H1 (cell line): ENCODE measurements at regions of chr17 and their contacts with region 1.

Region 1: GRCh38 chr17:79087428-79088143 is 13.0 kb downstream of the ENGASE start:
- DNase-seq: peak in 1 of 2 experiments; percentile 97
- H3K4me3 ChIP-seq: no peak overlapping the region
- H3K27ac ChIP-seq: no peak overlapping the region
- H3K4me1 ChIP-seq: no peaks in the 10 kb centered on the region
- H3K27me3 ChIP-seq: no peaks in the 10 kb centered on the region
- CTCF ChIP-seq: peak; percentile 91 to 98 (median 96)
- EP300 ChIP-seq: no peak
- POLR2A ChIP-seq: no peak
- RAD21 ChIP-seq: peak; percentile 89 to 93

Region 2: DNA sequence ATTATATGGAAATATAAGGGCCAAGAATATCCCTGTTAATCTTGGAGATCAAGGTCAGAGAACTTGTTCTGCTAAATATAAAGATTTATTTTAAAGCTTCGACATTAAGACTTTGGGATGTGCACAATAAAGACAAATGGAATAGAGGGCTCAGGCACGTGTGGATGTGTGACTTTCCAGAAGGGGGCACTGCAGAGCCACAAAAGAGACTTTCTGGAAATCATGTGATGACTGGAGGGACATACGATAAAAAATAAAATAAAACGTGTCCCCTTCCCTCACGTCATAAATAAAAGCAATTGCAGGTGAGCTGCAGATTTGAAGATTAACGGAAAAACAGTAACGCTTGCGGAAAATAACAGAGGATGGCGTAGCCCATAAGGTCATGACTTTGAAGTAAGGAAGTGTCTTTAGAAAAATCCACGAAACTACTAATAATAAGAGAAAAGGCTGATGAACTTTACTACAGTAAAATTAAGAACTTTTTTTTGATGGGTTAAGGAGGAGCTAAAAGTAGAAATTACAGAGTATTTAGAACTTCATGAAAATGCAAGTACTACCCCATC is 22.4 kb before region 1 on chr17:
- CTCF ChIA-PET with region 1: interaction called, 76 read pairs
- POLR2A ChIA-PET with region 1: no interaction called
- DNase-seq: peak in 1 of 2 experiments; percentile 76
- H3K4me3 ChIP-seq: no peak overlapping the region
- H3K27ac ChIP-seq: no peak overlapping the region
- H3K4me1 ChIP-seq: no peaks in the 10 kb centered on the region
- H3K27me3 ChIP-seq: peaks cover 0 to 2% (median 0%) of the 10 kb centered on the region in 4 experiments; a peak in 1 of 7 replicates
- CTCF ChIP-seq: peak; percentile 30 to 67 (median 64)
- EP300 ChIP-seq: no peak
- POLR2A ChIP-seq: no peak
- RAD21 ChIP-seq: peak; percentile 74 to 76

Region 3: DNA sequence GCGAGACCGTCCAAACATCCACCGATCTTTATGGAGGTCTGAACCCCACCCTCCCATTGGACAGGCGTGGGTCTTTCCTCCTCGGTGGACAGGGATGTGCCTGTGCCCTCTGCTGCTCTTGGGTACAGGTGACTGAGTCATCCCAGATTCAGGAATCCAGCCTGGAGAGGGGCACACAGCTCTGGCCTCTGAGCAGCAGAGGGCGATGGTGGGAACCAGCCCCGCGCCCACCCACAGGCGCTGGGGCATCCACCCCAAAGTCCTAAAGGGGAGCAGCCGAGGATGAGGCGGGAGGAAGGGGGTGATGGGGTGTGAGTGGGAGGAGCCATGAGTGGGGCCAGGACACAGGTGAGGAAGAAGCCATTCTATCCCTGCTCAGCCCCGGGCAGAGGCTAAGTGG is 22.0 kb after region 1 on chr17:
- CTCF ChIA-PET with region 1: interaction called, 29 read pairs
- POLR2A ChIA-PET with region 1: interaction called, 4 read pairs
- DNase-seq: peak in 1 of 2 experiments; percentile 72
- H3K4me3 ChIP-seq: no peak overlapping the region
- H3K27ac ChIP-seq: no peak overlapping the region
- H3K4me1 ChIP-seq: peaks cover 0 to 3% (median 0%) of the 10 kb centered on the region in 4 experiments; a peak in 3 of 7 replicates
- H3K27me3 ChIP-seq: no peaks in the 10 kb centered on the region
- CTCF ChIP-seq: peak; percentile 73 to 78 (median 78)
- EP300 ChIP-seq: no peak
- POLR2A ChIP-seq: no peak
- RAD21 ChIP-seq: peak; percentile 52 to 58

Region 4: GRCh38 chr17:79126139-79126538 is 38.6 kb after region 1 on chr17:
- CTCF ChIA-PET with region 1: interaction called, 45 read pairs
- POLR2A ChIA-PET with region 1: no interaction called
- DNase-seq: peak in 1 of 2 experiments; percentile 69
- H3K4me3 ChIP-seq: no peak overlapping the region
- H3K27ac ChIP-seq: no peak overlapping the region
- H3K4me1 ChIP-seq: no peaks in the 10 kb centered on the region
- H3K27me3 ChIP-seq: no peaks in the 10 kb centered on the region
- CTCF ChIP-seq: peak; percentile 57 to 79 (median 68)
- EP300 ChIP-seq: no peak
- POLR2A ChIP-seq: no peak
- RAD21 ChIP-seq: peak; percentile 64 to 74

Region 5: GRCh38 chr17:79188048-79188447 is 100.5 kb after region 1 on chr17:
- CTCF ChIA-PET with region 1: interaction called, 15 read pairs
- POLR2A ChIA-PET with region 1: interaction called, 3 read pairs
- DNase-seq: peak; percentile 38 to 89
- H3K4me3 ChIP-seq: no peak overlapping the region
- H3K27ac ChIP-seq: no peak overlapping the region
- H3K4me1 ChIP-seq: peaks cover 10 to 40% (median 26%) of the 10 kb centered on the region in 4 experiments
- H3K27me3 ChIP-seq: peaks cover 3 to 24% (median 17%) of the 10 kb centered on the region in 4 experiments
- CTCF ChIP-seq: peak; percentile 91 to 97 (median 95)
- EP300 ChIP-seq: no peak
- POLR2A ChIP-seq: no peak
- RAD21 ChIP-seq: peak; percentile 97